Calu3 (cell line): ENCODE measurements at regions of chr17 and their contacts with region 1.

Region 1: DNA sequence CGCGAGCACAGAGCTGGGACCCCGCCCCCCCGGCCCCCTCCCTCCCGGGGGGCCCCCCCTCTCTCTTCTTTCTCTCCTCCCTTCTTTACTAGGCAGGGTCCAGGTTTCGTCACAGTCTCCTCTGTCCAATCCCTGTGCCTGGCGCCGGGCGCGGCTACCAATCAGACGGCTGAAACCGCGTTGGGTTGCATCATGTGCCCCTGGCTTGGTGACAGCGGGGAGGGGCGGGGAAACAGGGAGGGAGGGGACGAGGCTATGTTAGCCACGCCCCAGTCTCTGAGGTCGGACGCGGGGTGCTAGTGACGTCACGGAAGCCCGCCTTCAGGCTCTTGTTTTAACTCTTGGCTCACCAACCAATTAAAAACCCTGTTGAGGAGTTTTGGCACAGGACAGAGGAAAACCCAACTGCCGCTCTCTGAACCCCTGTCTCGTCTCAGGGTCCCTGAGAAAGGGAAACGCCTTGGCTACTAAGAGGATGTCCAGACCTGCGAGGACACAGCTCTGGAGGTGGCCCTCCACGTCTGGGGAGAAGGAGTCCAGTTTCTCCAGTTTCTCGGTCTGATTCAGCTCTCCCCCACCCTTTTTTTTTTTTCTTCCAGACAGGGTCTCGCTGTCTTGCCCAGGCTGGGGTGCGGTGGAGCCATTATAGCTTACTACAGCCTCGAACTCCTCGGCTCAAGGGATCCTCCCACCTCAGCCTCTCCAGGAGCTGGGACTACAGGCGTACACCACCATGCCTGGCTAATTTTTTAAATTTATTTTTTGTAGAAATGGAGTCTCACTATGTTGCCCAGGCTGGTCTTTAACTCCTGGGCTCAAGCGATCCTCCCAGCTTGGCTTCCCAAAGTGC is 439 bp upstream of the PLEKHH3 start:
- DNase-seq: peak; percentile 100
- H3K4me3 Mint-ChIP-seq: peak overlapping the region; percentile 93
- H3K27ac Mint-ChIP-seq: peak overlapping the region; percentile 94
- H3K4me1 Mint-ChIP-seq: peaks cover 48% of the 10 kb centered on the region
- H3K27me3 Mint-ChIP-seq: peaks cover 12% of the 10 kb centered on the region
- CTCF ChIP-seq: no peak

Region 2: GRCh38 chr17:42347198-42347597 is 330.0 kb before region 1 on chr17:
- CTCF ChIA-PET with region 1: no interaction called
- intact Hi-C with region 1: no loop called
- DNase-seq: peak; percentile 47
- H3K4me3 Mint-ChIP-seq: no peak overlapping the region
- H3K27ac Mint-ChIP-seq: no peak overlapping the region
- H3K4me1 Mint-ChIP-seq: peaks cover 24% of the 10 kb centered on the region
- H3K27me3 Mint-ChIP-seq: no peaks in the 10 kb centered on the region
- CTCF ChIP-seq: no peak

Region 3: DNA sequence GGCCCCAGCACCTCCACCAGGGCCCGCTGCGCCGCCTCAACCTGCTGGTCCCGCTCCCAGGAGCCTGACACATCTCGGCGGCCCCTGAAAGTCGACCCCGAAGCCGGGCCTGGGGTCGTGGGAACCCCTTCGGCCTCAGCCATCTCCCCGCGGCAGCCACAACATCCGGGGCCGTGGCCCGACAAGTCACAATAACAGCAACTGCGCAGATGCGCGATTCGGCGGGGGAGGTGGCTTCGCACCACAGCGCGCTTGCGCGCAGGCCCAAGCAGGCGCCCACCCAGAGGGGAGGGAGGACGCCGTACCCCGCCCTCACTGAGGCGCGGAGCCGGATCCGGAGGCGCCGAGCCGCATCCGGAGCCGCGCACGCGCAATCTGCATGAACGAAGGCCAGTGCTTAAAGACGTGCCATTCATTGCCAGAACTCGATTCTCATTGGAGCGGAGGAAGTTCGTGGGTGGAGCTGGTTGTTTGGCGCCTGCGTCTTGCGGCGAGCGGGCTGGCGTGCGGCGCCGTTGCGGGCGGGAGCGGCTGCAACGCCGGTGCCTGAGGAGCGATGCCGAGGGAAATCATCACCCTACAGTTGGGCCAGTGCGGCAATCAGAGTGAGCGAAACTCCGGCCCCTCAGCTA is 67.9 kb before region 1 on chr17 and contains the starts of genes RETREG3 and TUBG1:
- CTCF ChIA-PET with region 1: interaction called, 36 read pairs
- intact Hi-C with region 1: loop called (anchors 5 kb)
- DNase-seq: peak; percentile 100
- H3K4me3 Mint-ChIP-seq: peak within 1 kb of the TSS; percentile 88
- H3K27ac Mint-ChIP-seq: peak within 1 kb of the TSS; percentile 75
- H3K4me1 Mint-ChIP-seq: no peaks in the 10 kb centered on the region
- H3K27me3 Mint-ChIP-seq: no peaks in the 10 kb centered on the region
- CTCF ChIP-seq: no peak
- total RNA-seq, gene RETREG3: 71.2 and 80.6 TPM in 2 replicates
- total RNA-seq, gene TUBG1: 130 and 133 TPM in 2 replicates

Region 4: GRCh38 chr17:42618442-42619150 is 58.6 kb before region 1 on chr17:
- CTCF ChIA-PET with region 1: interaction called, 16 read pairs
- intact Hi-C with region 1: no loop called
- DNase-seq: peak; percentile 78
- H3K4me3 Mint-ChIP-seq: no peak overlapping the region
- H3K27ac Mint-ChIP-seq: no peak overlapping the region
- H3K4me1 Mint-ChIP-seq: peaks cover 15% of the 10 kb centered on the region
- H3K27me3 Mint-ChIP-seq: no peaks in the 10 kb centered on the region
- CTCF ChIP-seq: peak; percentile 49